Motor neuron (in vitro differentiated cells): ENCODE measurements at regions of chr1 and their contacts with region 1.

Region 1: GRCh38 chr1:115595279-115596079 is 46.3 kb upstream of the VANGL1 start:
- ATAC-seq: peak; percentile 97 to 99 (median 99)
- H3K4me3 ChIP-seq: no peak overlapping the region
- H3K27ac ChIP-seq: no peak overlapping the region
- H3K4me1 ChIP-seq: peaks cover 6 to 7% of the 10 kb centered on the region in 2 donors

Region 2: GRCh38 chr1:115275212-115275611 is 320.3 kb before region 1 on chr1:
- in situ Hi-C with region 1: loop called in 1 of 9 experiments (anchors 25 kb)
- ATAC-seq: peak in 1 of 8 experiments; percentile 26
- H3K4me3 ChIP-seq: no peak overlapping the region
- H3K27ac ChIP-seq: no peak overlapping the region
- H3K4me1 ChIP-seq: no peaks in the 10 kb centered on the region

Region 3: DNA sequence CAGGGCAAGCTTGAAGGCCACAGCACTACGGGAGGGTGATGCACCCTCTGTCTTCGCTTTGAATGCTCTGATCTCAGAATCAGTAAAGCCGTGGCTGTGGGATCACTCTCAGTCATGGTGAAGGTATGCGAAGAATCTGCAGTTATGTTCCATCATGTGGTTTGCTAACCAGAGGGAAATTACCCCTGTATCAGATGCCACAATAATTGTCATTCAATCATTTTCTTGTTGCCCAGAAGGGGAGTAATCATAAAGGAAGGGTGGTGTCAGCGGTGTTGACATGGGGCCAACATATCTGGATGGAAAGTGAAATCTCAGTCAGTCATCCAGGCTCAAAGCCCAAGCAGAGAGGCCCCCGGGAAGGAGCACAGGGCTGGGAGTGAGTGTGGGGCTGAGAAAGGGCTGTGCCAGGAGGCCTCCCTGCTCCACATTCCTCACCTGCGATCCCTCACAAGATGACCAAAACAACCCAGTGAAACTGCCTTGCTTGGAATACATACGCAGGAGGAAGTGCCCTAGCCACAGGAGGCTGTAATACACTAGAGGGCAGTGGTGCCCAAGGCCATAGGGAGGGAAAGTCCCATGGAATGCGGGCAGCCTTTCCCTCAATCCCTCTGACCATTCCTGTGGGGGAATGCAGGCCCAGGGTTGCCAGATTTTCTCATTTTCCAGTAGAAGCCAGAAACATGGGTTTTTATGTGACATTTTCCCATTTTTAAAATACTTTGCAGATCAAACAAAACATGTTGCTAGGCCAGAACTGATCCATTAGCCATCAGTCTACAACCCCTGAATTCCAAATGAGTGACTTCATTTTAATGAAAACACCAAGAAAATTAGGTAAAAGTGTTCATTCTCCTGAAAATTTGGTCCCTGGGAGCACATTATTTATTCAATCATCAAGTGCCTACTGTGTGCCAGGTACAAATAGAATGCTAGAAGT is 49.4 kb before region 1 on chr1:
- in situ Hi-C with region 1: no loop called
- ATAC-seq: peak; percentile 36 to 92 (median 82)
- H3K4me3 ChIP-seq: no peak overlapping the region
- H3K27ac ChIP-seq: no peak overlapping the region
- H3K4me1 ChIP-seq: no peaks in the 10 kb centered on the region

Region 4: DNA sequence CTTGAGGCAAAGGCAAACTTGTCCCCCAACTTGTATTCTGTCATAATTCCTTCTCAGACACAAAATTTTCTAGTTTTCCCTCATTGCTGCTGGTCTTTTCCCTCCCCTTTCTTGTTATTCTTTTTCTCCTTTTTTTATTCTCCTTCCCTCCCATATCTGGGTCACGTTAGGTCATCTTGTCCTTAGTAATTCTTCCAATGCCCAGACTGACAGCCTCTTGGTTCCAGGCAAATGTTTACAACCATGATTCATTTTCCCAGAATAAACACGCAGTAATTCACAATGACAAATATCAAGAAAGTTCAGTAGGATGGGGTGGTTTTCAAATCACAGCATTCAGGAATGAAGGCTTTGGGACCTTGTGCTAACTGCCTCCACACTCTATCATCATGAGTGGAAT is 220.2 kb after region 1 on chr1:
- in situ Hi-C with region 1: no loop called
- ATAC-seq: peak in 2 of 8 experiments; percentile 22 to 36
- H3K4me3 ChIP-seq: no peak overlapping the region
- H3K27ac ChIP-seq: no peak overlapping the region
- H3K4me1 ChIP-seq: no peaks in the 10 kb centered on the region